Dorsolateral prefrontal cortex (tissue), 120 donors: ENCODE measurements at regions of chr3 and their contacts with region 1.

Region 1: DNA sequence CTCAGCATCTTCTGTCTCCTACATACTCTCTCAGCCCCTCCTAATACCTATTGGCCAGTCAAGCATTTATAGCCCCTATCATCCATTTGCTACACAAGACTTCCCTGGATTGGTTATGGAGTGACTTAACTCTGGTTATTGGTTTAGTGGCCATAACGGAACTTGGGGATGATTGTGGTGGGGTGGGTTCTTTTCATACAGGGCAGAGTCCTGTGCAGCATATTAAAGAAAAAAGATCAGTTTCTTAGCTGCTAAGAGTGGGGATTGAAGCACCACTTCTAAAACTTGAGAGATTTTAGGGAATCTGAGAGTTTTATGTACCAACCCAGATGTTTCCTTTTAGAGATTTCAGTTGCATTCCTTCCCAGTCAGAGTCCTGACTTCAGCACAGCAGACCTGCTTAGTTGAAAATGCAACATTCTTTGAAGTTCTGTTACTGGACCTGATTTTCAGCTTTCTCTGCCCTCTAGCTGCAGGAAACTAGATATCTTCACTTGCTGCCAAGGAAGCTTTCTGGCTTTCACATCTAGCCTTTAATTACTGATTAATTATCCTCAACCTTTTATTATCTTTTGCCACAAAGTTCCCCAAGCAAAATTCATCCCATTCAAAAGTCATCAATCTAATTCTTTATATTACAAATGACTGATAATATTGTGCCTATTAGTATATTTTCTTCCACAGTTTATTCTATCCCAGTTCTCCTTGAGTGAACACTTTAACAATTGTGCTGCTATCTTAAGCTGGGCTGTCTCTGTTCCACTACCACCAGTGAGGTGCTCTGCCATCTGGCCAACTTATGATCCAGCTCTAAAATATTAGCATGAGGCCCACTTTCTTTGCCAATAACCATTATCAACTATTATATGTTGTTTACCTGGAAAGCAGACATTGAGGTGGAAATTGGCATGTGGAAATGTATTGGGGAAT is 906.0 kb upstream of the ALCAM start:
- DNase-seq: no peak
- H3K4me3 ChIP-seq: no peak overlapping the region
- H3K27ac ChIP-seq: peak overlapping the region in 38 of 59 donors; percentile 1 to 78 (median 45)
- H3K27me3 ChIP-seq: no peaks in the 10 kb centered on the region
- CTCF ChIP-seq: peak; percentile 38 to 88 (median 70)

Region 2: GRCh38 chr3:104102386-104102785 is 358.4 kb before region 1 on chr3:
- intact Hi-C with region 1: loop called in 1 of 2 experiments (anchors 10 kb)
- DNase-seq: no peak
- H3K4me3 ChIP-seq: no peak overlapping the region
- H3K27ac ChIP-seq: no peak overlapping the region
- H3K27me3 ChIP-seq: peaks cover 0 to 3% (median 0%) of the 10 kb centered on the region in 45 donors
- CTCF ChIP-seq: peak in 52 of 56 donors; percentile 20 to 74 (median 53)

Region 3: DNA sequence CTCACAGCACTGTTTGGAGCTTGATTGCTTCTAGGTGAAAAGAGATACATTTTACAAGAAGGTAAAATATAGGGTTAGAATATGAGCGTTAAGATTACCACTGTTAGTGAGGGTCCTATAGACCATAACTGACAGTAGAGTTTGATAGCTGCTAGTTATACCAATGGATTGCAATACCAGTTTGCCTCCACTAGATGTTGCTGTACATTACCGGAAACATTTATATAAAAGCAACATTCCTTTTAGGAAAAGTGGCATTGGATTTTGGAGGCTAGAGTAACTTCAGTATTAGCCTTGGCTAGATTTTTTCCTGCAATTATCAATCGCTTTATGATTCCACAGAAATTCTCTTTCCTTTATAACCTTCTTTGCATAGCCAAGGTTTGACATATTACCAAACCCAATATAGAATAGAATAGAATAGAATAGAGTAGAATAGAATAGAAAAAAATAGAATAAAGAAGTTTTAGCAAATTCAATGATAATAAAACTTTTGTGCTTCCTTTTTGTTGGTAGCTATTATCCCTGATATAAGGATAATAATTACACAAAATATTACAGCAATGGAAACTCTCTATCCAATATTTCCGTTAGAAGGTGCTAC is 187.6 kb before region 1 on chr3:
- intact Hi-C with region 1: loop called (anchors 2 to 5 kb)
- DNase-seq: no peak
- H3K4me3 ChIP-seq: no peak overlapping the region
- H3K27ac ChIP-seq: no peak overlapping the region
- H3K27me3 ChIP-seq: no peaks in the 10 kb centered on the region
- CTCF ChIP-seq: peak; percentile 47 to 85 (median 71)